Transverse colon (tissue), 4 donors: ENCODE measurements at regions of chrX and their contacts with region 1.

Region 1: DNA sequence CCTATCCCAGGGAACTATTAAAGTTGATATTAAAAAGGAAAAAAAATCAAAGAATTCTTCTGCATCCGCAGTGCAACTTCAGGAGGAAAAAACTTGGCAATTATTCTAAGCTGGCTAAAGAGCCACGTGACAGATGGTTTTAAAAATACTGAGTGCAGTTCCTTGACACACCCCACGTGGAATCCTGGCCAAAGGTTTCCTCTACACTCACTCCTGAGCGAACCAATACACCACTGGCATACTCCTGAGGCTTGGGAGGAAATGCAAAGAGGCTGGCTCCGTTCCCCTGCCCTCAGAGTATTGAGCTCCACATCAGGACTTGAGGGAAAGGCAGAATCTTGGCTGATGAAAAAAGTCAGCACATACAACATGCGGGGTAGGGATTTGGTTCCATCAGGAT is 133.8 kb upstream of the ATP6AP2 start:
- DNase-seq: peak; percentile 42
- H3K4me3 ChIP-seq: no peak overlapping the region
- H3K27ac ChIP-seq: no peak overlapping the region
- H3K4me1 ChIP-seq: peaks cover 0 to 9% (median 0%) of the 10 kb centered on the region in 4 donors
- H3K27me3 ChIP-seq: no peaks in the 10 kb centered on the region
- CTCF ChIP-seq: no peak
- EP300 ChIP-seq: no peak
- POLR2A ChIP-seq: no peak

Region 2: GRCh38 chrX:40434443-40434842 is 12.5 kb before region 1 on chrX:
- in situ Hi-C with region 1: no loop called
- intact Hi-C with region 1: loop called (anchors 1 kb)
- DNase-seq: no peak
- H3K4me3 ChIP-seq: no peak overlapping the region
- H3K27ac ChIP-seq: no peak overlapping the region
- H3K4me1 ChIP-seq: no peaks in the 10 kb centered on the region
- H3K27me3 ChIP-seq: no peaks in the 10 kb centered on the region
- CTCF ChIP-seq: no peak
- EP300 ChIP-seq: no peak
- POLR2A ChIP-seq: no peak